ENCODE measurements at regions of chr7 and their contacts with region 1.

Region 1: GRCh38 chr7:143479055-143479766 is 1.5 kb downstream of the TAS2R41 start:
- DNase-seq: no peak
- H3K4me3 ChIP-seq: no peak overlapping the region
- CTCF ChIP-seq: no peak

Region 2: DNA sequence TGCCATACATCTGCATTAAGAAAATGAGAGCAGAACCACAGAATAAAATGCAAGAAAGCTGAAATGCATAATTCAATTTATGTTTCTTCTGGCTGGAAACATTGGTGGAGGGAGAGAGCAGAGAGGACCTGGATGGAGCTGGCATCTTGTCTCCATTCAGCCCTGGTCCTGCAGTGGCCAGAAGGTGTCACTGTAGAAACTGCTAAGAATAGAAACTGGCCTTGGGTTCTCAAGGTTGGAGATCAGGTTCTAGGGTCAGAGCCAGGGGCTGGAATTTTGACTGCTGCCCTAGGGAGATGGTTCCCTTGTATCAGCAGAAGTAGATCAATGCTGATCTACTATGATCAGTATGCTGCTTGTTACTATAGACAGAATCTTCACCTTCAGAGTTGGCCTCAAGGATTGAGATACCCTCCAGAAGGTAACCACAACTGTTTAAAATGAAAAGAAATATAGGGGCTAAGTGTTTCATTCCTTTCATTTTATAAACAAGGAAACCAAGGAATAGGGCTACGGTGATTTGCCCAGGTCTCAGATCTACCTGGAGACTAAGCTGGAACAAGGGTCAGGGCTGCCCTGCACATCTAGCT is 11.6 kb after region 1 on chr7:
- CTCF ChIA-PET with region 1: interaction called, 20 read pairs
- POLR2A ChIA-PET with region 1: no interaction called
- DNase-seq: no peak
- H3K4me3 ChIP-seq: no peak overlapping the region
- CTCF ChIP-seq: peak; percentile 55

Region 3: DNA sequence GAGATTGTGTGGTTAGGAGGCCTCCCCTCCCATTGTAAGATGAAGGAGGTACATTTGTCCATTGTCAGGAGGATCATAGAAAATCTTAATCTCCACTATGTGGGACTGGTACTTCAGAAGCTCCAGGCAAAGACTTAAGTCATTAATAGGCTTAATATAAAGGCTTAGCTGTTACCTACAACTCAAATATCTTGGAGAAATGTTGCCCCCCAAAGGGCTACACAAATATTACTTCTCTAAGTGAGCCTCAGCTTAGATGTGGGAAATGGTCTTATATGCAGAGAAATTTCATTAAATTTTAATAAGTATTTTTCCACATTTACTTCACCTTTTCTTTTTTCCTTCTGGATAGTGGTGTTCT is 25.7 kb after region 1 on chr7:
- CTCF ChIA-PET with region 1: no interaction called
- POLR2A ChIA-PET with region 1: no interaction called
- DNase-seq: no peak
- H3K4me3 ChIP-seq: no peak overlapping the region
- CTCF ChIP-seq: no peak